Activated naive CD4-positive, alpha-beta T cell treated with anti-CD3 and anti-CD28 coated beads for 36 hours (primary cell): ENCODE measurements at regions of chr6 and their contacts with region 1.

Region 1: GRCh38 chr6:87197547-87197946 is 42.2 kb downstream of the ZNF292 start:
- DNase-seq: peak; percentile 33
- H3K4me3 Mint-ChIP-seq: no peak overlapping the region
- H3K27ac Mint-ChIP-seq: peak overlapping the region; percentile 68
- H3K4me1 Mint-ChIP-seq: peaks cover 78% of the 10 kb centered on the region
- H3K27me3 Mint-ChIP-seq: no peaks in the 10 kb centered on the region

Region 2: GRCh38 chr6:87210979-87211378 is 13.4 kb after region 1 on chr6:
- CTCF ChIA-PET with region 1: interaction called, 3 read pairs
- intact Hi-C with region 1: loop called (anchors 1 kb)
- DNase-seq: peak; percentile 73
- H3K4me3 Mint-ChIP-seq: no peak overlapping the region
- H3K27ac Mint-ChIP-seq: peak overlapping the region; percentile 84
- H3K4me1 Mint-ChIP-seq: peaks cover 73% of the 10 kb centered on the region
- H3K27me3 Mint-ChIP-seq: no peaks in the 10 kb centered on the region

Region 3: DNA sequence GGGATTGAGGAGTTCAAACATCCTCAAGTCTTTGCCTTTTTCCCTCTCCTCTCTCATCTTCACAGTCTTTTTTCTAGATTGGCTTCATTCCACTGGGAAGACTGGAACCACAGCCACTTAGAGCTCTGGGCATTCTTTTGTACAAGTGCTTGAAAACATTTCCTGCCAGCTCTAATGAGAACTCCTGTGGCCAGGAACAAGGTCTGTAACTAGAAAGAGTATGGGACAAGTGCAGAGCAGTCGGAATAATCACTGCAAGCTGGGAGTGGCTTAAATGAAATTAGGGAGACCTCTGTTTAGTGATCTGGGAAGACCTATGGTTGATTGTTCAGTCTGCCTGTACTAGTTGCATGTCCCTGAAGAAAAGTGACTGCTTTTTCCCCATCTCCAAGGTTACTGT is 83.9 kb after region 1 on chr6:
- CTCF ChIA-PET with region 1: no interaction called
- intact Hi-C with region 1: no loop called
- DNase-seq: no peak
- H3K4me3 Mint-ChIP-seq: no peak overlapping the region
- H3K27ac Mint-ChIP-seq: no peak overlapping the region
- H3K4me1 Mint-ChIP-seq: peaks cover 11% of the 10 kb centered on the region
- H3K27me3 Mint-ChIP-seq: no peaks in the 10 kb centered on the region